Activated CD8-positive, alpha-beta memory T cell treated with anti-CD3 and anti-CD28 coated beads, Interleukin-2, amount 10 ng/mL, durations not matched to agents 7 days and 5 days (primary cell): ENCODE measurements at regions of chr19 and their contacts with region 1.

Region 1: DNA sequence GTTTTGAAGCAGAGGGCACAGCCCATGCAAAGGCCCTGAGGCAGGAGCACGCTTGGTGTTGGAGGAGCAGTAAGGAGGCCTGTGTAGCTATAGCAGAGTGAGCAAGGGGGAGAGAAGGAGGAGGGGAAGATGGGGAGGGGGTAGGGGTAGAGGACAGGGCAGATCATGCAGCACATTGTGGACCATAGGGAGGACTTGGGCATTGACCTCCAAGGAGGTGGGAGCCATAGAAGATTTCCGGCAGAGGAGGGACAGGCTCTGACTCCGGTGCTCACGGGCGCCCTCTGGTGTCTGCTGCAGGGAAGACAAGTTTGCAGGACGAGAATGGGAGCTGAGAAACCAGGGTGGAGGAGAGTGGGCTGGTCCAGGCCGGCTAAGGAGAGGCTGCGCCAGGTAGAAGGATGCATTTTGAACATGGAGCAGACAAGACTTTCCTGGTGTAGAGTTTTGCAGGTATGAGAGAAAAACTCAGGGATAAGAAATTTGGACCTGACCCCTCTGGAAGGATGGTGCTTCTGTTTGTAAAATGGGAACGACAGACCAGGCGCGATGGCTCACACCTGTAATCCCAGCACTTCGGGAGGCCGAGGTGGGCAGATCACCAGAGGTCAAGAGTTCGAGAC is 13.7 kb upstream of the CREB3L3 start:
- DNase-seq: peak; percentile 92
- ATAC-seq: peak; percentile 97
- H3K4me3 Mint-ChIP-seq: peak overlapping the region; percentile 33
- H3K27ac Mint-ChIP-seq: peak overlapping the region; percentile 45
- H3K4me1 Mint-ChIP-seq: peaks cover 10% of the 10 kb centered on the region
- H3K27me3 Mint-ChIP-seq: peaks cover 10% of the 10 kb centered on the region

Region 2: GRCh38 chr19:4007021-4007835 is 132.5 kb before region 1 on chr19 and contains the start of gene PIAS4:
- CTCF ChIA-PET with region 1: interaction called, 18 read pairs
- DNase-seq: peak; percentile 96
- ATAC-seq: peak; percentile 94
- H3K4me3 Mint-ChIP-seq: peak within 1 kb of the TSS; percentile 79
- H3K27ac Mint-ChIP-seq: peak within 1 kb of the TSS; percentile 82
- H3K4me1 Mint-ChIP-seq: peaks cover 20% of the 10 kb centered on the region
- H3K27me3 Mint-ChIP-seq: no peaks in the 10 kb centered on the region
- total RNA-seq, gene PIAS4: 34.0 to 39.4 TPM

Region 3: GRCh38 chr19:4094761-4095487 is 44.8 kb before region 1 on chr19:
- CTCF ChIA-PET with region 1: interaction called, 22 read pairs
- DNase-seq: no peak
- ATAC-seq: no peak
- H3K4me3 Mint-ChIP-seq: no peak overlapping the region
- H3K27ac Mint-ChIP-seq: no peak overlapping the region
- H3K4me1 Mint-ChIP-seq: peaks cover 9% of the 10 kb centered on the region
- H3K27me3 Mint-ChIP-seq: no peaks in the 10 kb centered on the region

Region 4: GRCh38 chr19:4115050-4115817 is 24.5 kb before region 1 on chr19:
- CTCF ChIA-PET with region 1: interaction called, 24 read pairs
- DNase-seq: peak; percentile 91
- ATAC-seq: peak; percentile 99
- H3K4me3 Mint-ChIP-seq: peak overlapping the region; percentile 40
- H3K27ac Mint-ChIP-seq: peak overlapping the region; percentile 87
- H3K4me1 Mint-ChIP-seq: peaks cover 61% of the 10 kb centered on the region
- H3K27me3 Mint-ChIP-seq: no peaks in the 10 kb centered on the region

Region 5: DNA sequence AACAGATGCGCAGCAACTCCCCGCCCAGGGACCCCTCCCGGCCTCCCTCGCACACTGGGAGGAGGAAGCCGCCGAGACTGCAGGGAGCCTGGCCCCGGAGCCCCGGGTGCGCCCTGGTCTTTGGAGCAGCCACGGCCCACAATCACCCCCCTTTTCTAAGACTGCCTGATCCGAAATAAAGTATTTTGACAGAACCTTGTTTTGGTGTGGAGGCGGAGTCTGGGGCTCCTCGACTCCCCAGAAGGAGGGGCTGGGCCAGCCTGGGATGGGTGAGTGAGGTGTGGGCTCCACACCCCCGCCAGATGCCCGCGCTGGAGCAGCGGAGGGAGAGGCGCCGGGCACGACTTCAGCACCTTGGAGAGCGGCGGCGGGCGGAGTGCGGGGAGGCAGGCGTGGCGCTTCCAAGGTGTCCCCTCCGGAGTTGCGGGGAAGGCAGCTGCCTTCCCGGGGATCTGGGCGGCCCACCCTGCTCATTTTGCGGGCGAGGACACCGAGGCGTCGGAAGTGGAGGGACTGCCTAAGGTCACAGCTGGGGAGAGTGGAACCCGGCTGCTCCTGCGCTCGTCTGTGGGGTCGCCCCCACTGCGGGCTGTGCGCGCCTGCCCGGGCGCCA is 33.2 kb after region 1 on chr19:
- CTCF ChIA-PET with region 1: interaction called, 11 read pairs
- DNase-seq: peak; percentile 75
- ATAC-seq: peak; percentile 87
- H3K4me3 Mint-ChIP-seq: no peak overlapping the region
- H3K27ac Mint-ChIP-seq: no peak overlapping the region
- H3K4me1 Mint-ChIP-seq: peaks cover 4% of the 10 kb centered on the region
- H3K27me3 Mint-ChIP-seq: peaks cover 3% of the 10 kb centered on the region

Region 6: GRCh38 chr19:4229179-4229931 is 89.6 kb after region 1 on chr19 and contains the start of gene EBI3:
- CTCF ChIA-PET with region 1: no interaction called
- DNase-seq: peak; percentile 66
- ATAC-seq: peak; percentile 77
- H3K4me3 Mint-ChIP-seq: peak within 1 kb of the TSS; percentile 64
- H3K27ac Mint-ChIP-seq: no peak within 1 kb of the TSS
- H3K4me1 Mint-ChIP-seq: peaks cover 8% of the 10 kb centered on the region
- H3K27me3 Mint-ChIP-seq: peaks cover 3% of the 10 kb centered on the region
- total RNA-seq, gene EBI3: 2.6 to 14.7 TPM